Activated CD4-positive, alpha-beta T cell treated with anti-CD3 and anti-CD28 coated beads for 36 hours (primary cell): ENCODE measurements at regions of chr4 and their contacts with region 1.

Region 1: GRCh38 chr4:145180298-145181090 is at the start of gene OTUD4:
- DNase-seq: peak; percentile 97
- ATAC-seq: peak; percentile 84
- H3K4me3 Mint-ChIP-seq: peak within 1 kb of the TSS; percentile 91
- H3K27ac Mint-ChIP-seq: peak within 1 kb of the TSS; percentile 97
- H3K4me1 Mint-ChIP-seq: peaks cover 29% of the 10 kb centered on the region
- H3K27me3 Mint-ChIP-seq: no peaks in the 10 kb centered on the region
- total RNA-seq, gene OTUD4: 52.6 to 57.1 TPM

Region 2: GRCh38 chr4:145097821-145098674 is 82.4 kb before region 1 on chr4 and contains the starts of genes ABCE1 and ANAPC10:
- CTCF ChIA-PET with region 1: interaction called, 7 read pairs
- POLR2A ChIA-PET with region 1: interaction called, 4 read pairs
- intact Hi-C with region 1: loop called (anchors 1 kb)
- DNase-seq: peak; percentile 98
- ATAC-seq: peak; percentile 92
- H3K4me3 Mint-ChIP-seq: peak within 1 kb of the TSS; percentile 97
- H3K27ac Mint-ChIP-seq: peak within 1 kb of the TSS; percentile 99
- H3K4me1 Mint-ChIP-seq: peaks cover 22% of the 10 kb centered on the region
- H3K27me3 Mint-ChIP-seq: no peaks in the 10 kb centered on the region
- total RNA-seq, gene ABCE1: 148 to 172 TPM
- total RNA-seq, gene ANAPC10: 27.7 to 31.5 TPM

Region 3: GRCh38 chr4:145170223-145170622 is 10.3 kb before region 1 on chr4:
- CTCF ChIA-PET with region 1: interaction called, 10 read pairs
- POLR2A ChIA-PET with region 1: interaction called, 3 read pairs
- intact Hi-C with region 1: no loop called
- DNase-seq: no peak
- ATAC-seq: no peak
- H3K4me3 Mint-ChIP-seq: no peak overlapping the region
- H3K27ac Mint-ChIP-seq: peak overlapping the region; percentile 44
- H3K4me1 Mint-ChIP-seq: peaks cover 39% of the 10 kb centered on the region
- H3K27me3 Mint-ChIP-seq: no peaks in the 10 kb centered on the region

Region 4: GRCh38 chr4:145773581-145774234 is 593.2 kb after region 1 on chr4:
- CTCF ChIA-PET with region 1: no interaction called
- POLR2A ChIA-PET with region 1: no interaction called
- intact Hi-C with region 1: no loop called
- DNase-seq: no peak
- ATAC-seq: peak; percentile 51
- H3K4me3 Mint-ChIP-seq: no peak overlapping the region
- H3K27ac Mint-ChIP-seq: peak overlapping the region; percentile 20
- H3K4me1 Mint-ChIP-seq: peaks cover 5% of the 10 kb centered on the region
- H3K27me3 Mint-ChIP-seq: no peaks in the 10 kb centered on the region

Region 5: GRCh38 chr4:145808021-145808650 is 627.6 kb after region 1 on chr4:
- CTCF ChIA-PET with region 1: no interaction called
- POLR2A ChIA-PET with region 1: no interaction called
- intact Hi-C with region 1: loop called in 1 of 2 experiments (anchors 5 kb)
- DNase-seq: peak; percentile 65
- ATAC-seq: peak; percentile 82
- H3K4me3 Mint-ChIP-seq: peak overlapping the region; percentile 39
- H3K27ac Mint-ChIP-seq: peak overlapping the region; percentile 95
- H3K4me1 Mint-ChIP-seq: peaks cover 59% of the 10 kb centered on the region
- H3K27me3 Mint-ChIP-seq: no peaks in the 10 kb centered on the region

Region 6: DNA sequence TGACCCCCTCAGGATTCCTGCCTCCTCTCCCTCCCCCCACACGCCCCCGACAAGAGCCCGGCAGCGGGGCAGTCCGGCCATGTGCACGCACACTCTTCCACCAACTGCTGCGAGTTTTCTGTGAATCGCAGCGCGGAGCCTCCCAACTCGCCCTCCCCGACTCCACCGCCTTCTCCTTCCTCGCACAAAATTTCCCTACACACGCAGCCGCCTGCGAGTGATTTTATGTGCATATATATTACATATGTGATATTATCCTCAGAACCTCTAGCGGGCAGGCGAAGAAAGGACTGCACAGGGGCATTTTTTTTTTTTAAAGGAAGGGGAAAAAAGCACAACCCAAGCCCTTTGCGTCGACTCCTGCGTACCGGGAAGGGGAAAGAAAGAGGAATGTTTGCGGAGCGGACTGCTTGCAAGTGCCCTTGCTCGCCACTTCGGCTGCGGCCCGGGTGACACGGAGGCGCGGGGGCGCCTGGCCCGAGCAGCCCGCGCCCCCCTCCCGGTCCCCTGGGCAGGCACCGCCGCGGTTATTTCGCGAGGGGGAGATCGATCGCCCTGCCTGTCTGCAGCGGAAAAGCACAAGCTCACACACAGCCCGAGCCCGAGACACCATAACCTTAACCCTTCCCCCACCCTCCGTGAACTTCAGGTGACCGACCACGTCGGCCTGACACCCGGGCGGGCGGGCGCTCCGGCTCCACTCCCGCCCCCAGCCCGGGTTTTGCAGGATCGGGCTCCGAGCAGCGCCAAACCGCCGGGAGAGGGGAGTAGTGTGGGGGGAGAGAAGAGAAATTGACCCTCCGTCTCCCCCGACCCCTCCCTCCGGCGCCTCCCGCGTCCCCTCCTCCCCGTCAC is 755.9 kb after region 1 on chr4:
- CTCF ChIA-PET with region 1: no interaction called
- POLR2A ChIA-PET with region 1: no interaction called
- intact Hi-C with region 1: loop called (anchors 1 to 5 kb)
- DNase-seq: peak; percentile 77
- ATAC-seq: peak; percentile 41
- H3K4me3 Mint-ChIP-seq: peak overlapping the region; percentile 97
- H3K27ac Mint-ChIP-seq: peak overlapping the region; percentile 93
- H3K4me1 Mint-ChIP-seq: peaks cover 54% of the 10 kb centered on the region
- H3K27me3 Mint-ChIP-seq: no peaks in the 10 kb centered on the region

Region 7: DNA sequence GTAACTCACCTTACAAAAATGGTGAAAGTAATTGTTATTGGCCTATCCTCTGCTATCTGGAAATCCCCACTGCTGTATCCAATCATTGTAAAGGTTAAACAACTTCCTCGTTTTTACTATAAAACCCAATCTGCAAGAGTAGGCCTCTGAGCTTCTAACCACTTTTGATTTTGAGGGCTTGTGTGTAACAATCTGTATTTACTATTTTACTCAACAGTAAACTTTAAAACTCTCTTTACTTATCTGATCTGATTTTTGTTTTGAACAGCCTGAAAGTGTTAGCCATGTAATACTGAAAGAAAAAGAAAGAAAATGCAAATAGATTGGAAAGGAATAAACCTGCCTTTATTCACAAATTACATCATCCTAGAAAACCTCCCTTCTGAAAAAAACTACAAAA is 1278.1 kb after region 1 on chr4:
- CTCF ChIA-PET with region 1: no interaction called
- POLR2A ChIA-PET with region 1: no interaction called
- intact Hi-C with region 1: loop called in 1 of 2 experiments (anchors 10 kb)
- DNase-seq: no peak
- ATAC-seq: peak; percentile 96
- H3K4me3 Mint-ChIP-seq: peak overlapping the region; percentile 62
- H3K27ac Mint-ChIP-seq: peak overlapping the region; percentile 93
- H3K4me1 Mint-ChIP-seq: peaks cover 24% of the 10 kb centered on the region
- H3K27me3 Mint-ChIP-seq: no peaks in the 10 kb centered on the region